ENCODE measurements at regions of chr11 and their contacts with region 1.

Region 1: DNA sequence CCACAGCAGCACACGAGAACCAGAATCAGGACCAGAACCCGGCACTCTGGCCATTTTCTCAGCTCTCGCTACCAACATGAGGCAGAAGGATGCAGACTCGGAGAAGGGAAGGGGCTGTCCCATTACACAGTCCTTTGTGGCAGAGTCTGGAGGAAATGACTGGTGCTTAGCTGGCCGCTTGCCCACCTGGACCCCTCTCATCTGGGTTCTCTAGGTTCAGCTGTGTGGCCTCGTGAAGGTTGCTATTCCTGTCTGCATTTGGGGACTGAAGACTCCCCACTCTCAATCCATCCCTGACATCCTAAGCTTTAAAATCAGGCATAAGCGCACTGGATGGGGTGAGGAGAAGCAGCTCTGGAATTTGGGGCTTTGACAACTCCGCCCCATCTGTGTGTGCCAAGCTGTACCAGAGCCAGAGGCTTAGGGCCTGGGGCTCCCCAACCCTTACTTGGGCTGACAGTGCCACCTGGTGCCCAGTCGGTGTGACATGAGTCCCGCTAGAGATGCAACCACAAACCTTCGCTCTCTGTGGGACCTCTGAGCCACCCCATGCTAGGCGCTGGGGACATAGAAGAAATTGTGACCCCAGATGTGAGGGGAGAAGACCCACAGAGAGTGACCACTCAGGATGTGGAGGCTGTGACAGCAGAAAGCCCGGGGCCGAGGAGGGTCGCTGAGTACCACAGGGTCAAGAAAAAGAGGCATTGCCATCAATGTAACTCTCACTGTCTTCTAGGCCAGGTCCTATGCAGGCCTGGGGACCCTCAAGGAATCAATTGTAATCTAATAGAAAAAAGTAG is 35.9 kb upstream of the FCHSD2 start:
- DNase-seq: peak; percentile 88
- ATAC-seq: peak; percentile 99
- H3K4me3 ChIP-seq: peak overlapping the region in 1 of 5 experiments; percentile 16
- H3K4me3 Mint-ChIP-seq: peak overlapping the region; percentile 37
- H3K27ac ChIP-seq: peak overlapping the region; percentile 17 to 19
- H3K27ac Mint-ChIP-seq: peak overlapping the region; percentile 81
- H3K4me1 ChIP-seq: peaks cover 32 to 40% of the 10 kb centered on the region in 2 donors
- H3K4me1 Mint-ChIP-seq: peaks cover 38% of the 10 kb centered on the region
- H3K27me3 ChIP-seq: no peaks in the 10 kb centered on the region
- H3K27me3 Mint-ChIP-seq: no peaks in the 10 kb centered on the region
- CTCF ChIP-seq: peak; percentile 93

Region 2: GRCh38 chr11:72831513-72832300 is 346.3 kb before region 1 on chr11:
- CTCF ChIA-PET with region 1: interaction called, 126 read pairs
- POLR2A ChIA-PET with region 1: interaction called, 3 read pairs
- intact Hi-C with region 1: loop called (anchors 1 kb)
- DNase-seq: peak; percentile 57
- ATAC-seq: peak; percentile 69
- H3K4me3 ChIP-seq: no peak overlapping the region
- H3K4me3 Mint-ChIP-seq: no peak overlapping the region
- H3K27ac ChIP-seq: peak overlapping the region; percentile 22 to 38
- H3K27ac Mint-ChIP-seq: peak overlapping the region; percentile 86
- H3K4me1 ChIP-seq: peaks cover 0 to 14% of the 10 kb centered on the region in 2 donors
- H3K4me1 Mint-ChIP-seq: peaks cover 24% of the 10 kb centered on the region
- H3K27me3 ChIP-seq: no peaks in the 10 kb centered on the region
- H3K27me3 Mint-ChIP-seq: no peaks in the 10 kb centered on the region
- CTCF ChIP-seq: peak; percentile 77

Region 3: DNA sequence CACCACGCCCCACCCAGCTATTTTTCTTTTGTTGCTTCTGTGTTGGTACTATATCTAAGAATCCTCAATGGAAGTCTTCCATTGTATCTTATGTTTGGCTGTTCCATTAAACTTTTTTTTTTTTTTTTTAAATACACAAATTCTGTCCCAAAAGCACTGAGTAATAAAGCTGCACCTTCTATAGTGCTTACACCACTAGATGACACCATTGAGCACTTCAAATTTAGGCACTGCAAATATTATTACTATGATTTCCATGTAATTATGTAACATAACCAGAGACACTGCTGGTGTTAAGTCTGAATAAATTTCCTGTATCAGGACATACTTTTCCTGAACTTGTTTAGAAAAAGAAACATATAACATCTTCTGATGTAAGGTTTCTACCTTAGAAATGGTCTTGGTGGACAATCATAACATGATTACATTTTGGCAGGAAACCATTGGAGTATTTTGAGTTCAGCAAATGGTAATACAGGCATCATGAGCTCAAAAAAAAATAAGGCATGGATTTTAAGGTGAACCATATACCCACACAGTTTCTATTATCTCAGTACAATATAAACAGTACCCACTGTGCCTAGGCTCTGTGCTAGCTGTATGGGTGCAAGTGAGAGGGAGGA is 253.3 kb before region 1 on chr11:
- CTCF ChIA-PET with region 1: interaction called, 187 read pairs
- POLR2A ChIA-PET with region 1: interaction called, 3 read pairs
- intact Hi-C with region 1: loop called (anchors 1 kb)
- DNase-seq: peak; percentile 53
- ATAC-seq: peak; percentile 54
- H3K4me3 ChIP-seq: no peak overlapping the region
- H3K4me3 Mint-ChIP-seq: no peak overlapping the region
- H3K27ac ChIP-seq: peak overlapping the region in 1 of 2 donors; percentile 72
- H3K27ac Mint-ChIP-seq: peak overlapping the region; percentile 73
- H3K4me1 ChIP-seq: peaks cover 14 to 18% of the 10 kb centered on the region in 2 donors
- H3K4me1 Mint-ChIP-seq: peaks cover 43% of the 10 kb centered on the region
- H3K27me3 ChIP-seq: no peaks in the 10 kb centered on the region
- H3K27me3 Mint-ChIP-seq: no peaks in the 10 kb centered on the region
- CTCF ChIP-seq: peak; percentile 70

Region 4: GRCh38 chr11:73053964-73054363 is 124.0 kb before region 1 on chr11:
- CTCF ChIA-PET with region 1: interaction called, 16 read pairs
- POLR2A ChIA-PET with region 1: no interaction called
- intact Hi-C with region 1: loop called (anchors 5 kb)
- DNase-seq: no peak
- ATAC-seq: no peak
- H3K4me3 ChIP-seq: no peak overlapping the region
- H3K4me3 Mint-ChIP-seq: no peak overlapping the region
- H3K27ac ChIP-seq: peak overlapping the region in 1 of 2 donors; percentile 81
- H3K27ac Mint-ChIP-seq: peak overlapping the region; percentile 78
- H3K4me1 ChIP-seq: peaks cover 55 to 81% of the 10 kb centered on the region in 2 donors
- H3K4me1 Mint-ChIP-seq: peaks cover 65% of the 10 kb centered on the region
- H3K27me3 ChIP-seq: no peaks in the 10 kb centered on the region
- H3K27me3 Mint-ChIP-seq: no peaks in the 10 kb centered on the region
- CTCF ChIP-seq: no peak

Region 5: DNA sequence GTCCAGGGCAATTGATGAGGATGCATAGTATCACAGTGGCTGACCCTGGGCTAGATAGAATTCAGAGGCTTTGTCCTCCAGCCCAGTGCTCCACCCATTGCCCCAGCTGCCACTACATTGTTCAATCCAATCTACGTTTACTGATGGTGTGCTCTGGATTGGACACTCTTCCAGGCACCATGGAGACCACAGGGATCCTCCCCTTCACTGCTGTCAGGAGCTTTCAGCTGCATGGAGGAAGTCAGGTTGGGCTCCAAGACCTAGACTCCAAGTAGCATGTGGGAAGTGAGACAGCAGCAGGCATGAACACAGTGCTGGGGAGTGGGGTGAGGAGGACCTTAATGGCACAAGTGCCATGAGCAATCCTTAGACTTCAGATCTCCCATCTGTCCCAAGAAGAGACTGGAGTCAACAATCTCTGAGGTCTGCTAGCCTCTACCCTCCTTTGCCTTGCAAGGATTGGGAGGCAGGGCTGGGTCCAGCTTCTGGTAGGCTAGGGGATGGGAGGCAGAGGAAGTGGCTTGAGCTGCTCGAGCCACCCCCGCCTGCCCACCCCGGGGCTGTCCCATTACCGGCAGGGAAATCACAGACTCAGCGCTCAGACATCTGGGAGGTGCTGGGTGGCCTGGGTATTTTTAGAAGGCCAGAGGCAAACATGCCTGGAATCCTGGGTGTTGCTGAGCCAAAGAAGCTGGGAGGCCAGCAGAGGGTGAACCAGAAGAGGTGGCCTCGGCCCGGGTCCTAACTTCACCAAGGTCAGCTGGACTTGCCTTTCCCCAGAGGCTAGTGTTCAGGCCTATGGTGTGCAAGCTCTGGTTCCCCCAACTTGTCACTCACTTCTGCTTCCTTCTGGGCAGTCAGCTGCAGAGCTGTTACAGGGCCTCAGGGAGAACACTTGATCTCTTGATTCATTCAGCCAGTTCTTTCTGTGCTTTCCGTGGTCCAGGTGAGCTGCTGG is 20.6 kb before region 1 on chr11:
- CTCF ChIA-PET with region 1: interaction called, 271 read pairs
- POLR2A ChIA-PET with region 1: interaction called, 29 read pairs
- intact Hi-C with region 1: loop called (anchors 1 kb)
- DNase-seq: peak; percentile 74
- ATAC-seq: peak; percentile 36
- H3K4me3 ChIP-seq: peak overlapping the region in 3 of 5 experiments; percentile 12 to 30 (median 17)
- H3K4me3 Mint-ChIP-seq: peak overlapping the region; percentile 77
- H3K27ac ChIP-seq: peak overlapping the region; percentile 86 to 94
- H3K27ac Mint-ChIP-seq: peak overlapping the region; percentile 95
- H3K4me1 ChIP-seq: peaks cover 91 to 94% of the 10 kb centered on the region in 2 donors
- H3K4me1 Mint-ChIP-seq: peaks cover 93% of the 10 kb centered on the region
- H3K27me3 ChIP-seq: no peaks in the 10 kb centered on the region
- H3K27me3 Mint-ChIP-seq: no peaks in the 10 kb centered on the region
- CTCF ChIP-seq: no peak

Region 6: DNA sequence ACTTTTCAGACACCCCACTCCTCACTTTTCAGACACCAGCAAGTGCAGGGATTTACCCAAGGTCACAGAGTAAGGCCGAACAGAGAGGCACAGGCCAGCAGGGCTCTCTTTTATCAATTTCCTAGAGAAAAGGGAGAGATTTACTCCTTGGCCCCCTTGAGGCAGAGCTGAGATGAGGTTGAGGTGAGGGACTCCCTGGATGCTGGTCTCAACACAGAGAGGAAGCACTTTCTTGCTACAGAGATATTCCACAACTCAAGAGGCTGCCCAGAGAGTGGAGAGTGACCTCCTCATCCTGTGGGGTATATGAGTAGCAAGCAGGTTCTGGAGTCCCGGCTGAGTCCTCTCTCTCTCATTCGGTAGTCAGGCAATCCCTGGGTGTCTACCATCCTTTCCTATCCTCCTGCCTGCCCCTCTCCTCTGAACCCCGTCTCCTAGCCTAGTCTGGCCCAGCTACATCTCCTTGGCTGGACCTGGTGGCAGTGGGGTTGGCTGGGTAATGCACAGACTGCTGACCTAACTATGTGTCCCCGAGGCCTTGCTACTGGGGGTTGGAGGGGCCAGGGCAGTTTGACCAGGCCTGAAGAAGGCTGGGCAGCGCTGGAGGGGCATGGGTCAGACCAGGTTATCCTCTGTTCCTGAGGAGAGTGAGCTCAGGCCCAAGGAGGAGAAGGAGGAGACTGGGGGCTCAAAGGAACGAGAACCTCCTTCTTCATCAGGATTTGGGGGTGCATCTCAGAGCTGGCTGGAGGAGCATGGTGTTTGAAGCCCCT is 128.3 kb after region 1 on chr11:
- CTCF ChIA-PET with region 1: no interaction called
- POLR2A ChIA-PET with region 1: no interaction called
- intact Hi-C with region 1: no loop called
- DNase-seq: no peak
- ATAC-seq: no peak
- H3K4me3 ChIP-seq: peak overlapping the region in 1 of 5 experiments; percentile 84
- H3K4me3 Mint-ChIP-seq: peak overlapping the region; percentile 59
- H3K27ac ChIP-seq: no peak overlapping the region
- H3K27ac Mint-ChIP-seq: no peak overlapping the region
- H3K4me1 ChIP-seq: peaks cover 20 to 25% of the 10 kb centered on the region in 2 donors
- H3K4me1 Mint-ChIP-seq: peaks cover 13% of the 10 kb centered on the region
- H3K27me3 ChIP-seq: peaks cover 0 to 60% (median 18%) of the 10 kb centered on the region in 4 experiments
- H3K27me3 Mint-ChIP-seq: peaks cover 31% of the 10 kb centered on the region
- CTCF ChIP-seq: no peak

Measured in B cell (primary cell).